Activated CD8-positive, alpha-beta T cell treated with anti-CD3 and anti-CD28 coated beads, Interleukin-2, amount 10 ng/mL, durations not matched to agents 7 days and 5 days (primary cell): ENCODE measurements at regions of chr12 and their contacts with region 1.

Region 1: DNA sequence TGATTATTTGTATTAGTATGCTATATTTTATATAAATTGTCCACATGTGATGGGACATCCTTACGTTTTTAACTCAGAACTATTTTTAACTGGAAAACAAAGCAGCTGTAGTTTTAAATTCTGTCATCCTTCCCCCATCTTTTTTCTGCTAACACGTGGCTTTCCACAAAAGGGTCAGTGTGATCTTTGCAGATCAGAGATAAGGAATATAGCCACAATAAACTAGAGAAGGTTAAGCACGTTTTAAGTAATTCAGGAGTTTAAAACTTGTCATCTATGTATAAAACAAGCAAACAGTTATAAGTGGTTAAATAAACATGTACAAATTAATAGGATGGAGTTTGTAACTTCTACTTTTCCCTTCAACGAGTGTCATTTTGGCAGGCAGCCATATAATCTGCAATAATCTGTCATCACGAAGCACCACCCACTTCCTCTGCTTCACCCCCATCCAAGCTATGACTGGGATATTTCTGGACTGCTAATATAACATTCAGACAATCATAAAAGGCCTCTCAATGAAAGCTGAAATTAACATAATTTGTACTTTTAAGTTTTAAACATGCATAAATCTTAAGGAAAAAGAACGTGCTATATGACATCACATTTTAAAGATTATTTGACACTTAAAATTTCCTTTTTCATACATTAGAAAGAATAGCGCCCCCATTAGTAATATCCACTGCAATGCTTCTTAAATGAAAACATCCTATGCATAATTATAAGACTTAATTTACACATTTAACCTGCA is 15.3 kb downstream of the TAOK3 start:
- DNase-seq: peak; percentile 69
- ATAC-seq: peak; percentile 74
- H3K4me3 Mint-ChIP-seq: peak overlapping the region; percentile 88
- H3K27ac Mint-ChIP-seq: peak overlapping the region; percentile 83
- H3K4me1 Mint-ChIP-seq: peaks cover 41% of the 10 kb centered on the region
- H3K27me3 Mint-ChIP-seq: no peaks in the 10 kb centered on the region

Region 2: GRCh38 chr12:118150625-118151024 is 206.8 kb before region 1 on chr12:
- CTCF ChIA-PET with region 1: no interaction called
- POLR2A ChIA-PET with region 1: no interaction called
- DNase-seq: no peak
- ATAC-seq: no peak
- H3K4me3 Mint-ChIP-seq: no peak overlapping the region
- H3K27ac Mint-ChIP-seq: no peak overlapping the region
- H3K4me1 Mint-ChIP-seq: no peaks in the 10 kb centered on the region
- H3K27me3 Mint-ChIP-seq: no peaks in the 10 kb centered on the region

Region 3: GRCh38 chr12:118164798-118165486 is 192.5 kb before region 1 on chr12:
- CTCF ChIA-PET with region 1: interaction called, 14 read pairs
- POLR2A ChIA-PET with region 1: no interaction called
- DNase-seq: no peak
- ATAC-seq: no peak
- H3K4me3 Mint-ChIP-seq: no peak overlapping the region
- H3K27ac Mint-ChIP-seq: no peak overlapping the region
- H3K4me1 Mint-ChIP-seq: peaks cover 2% of the 10 kb centered on the region
- H3K27me3 Mint-ChIP-seq: no peaks in the 10 kb centered on the region

Region 4: DNA sequence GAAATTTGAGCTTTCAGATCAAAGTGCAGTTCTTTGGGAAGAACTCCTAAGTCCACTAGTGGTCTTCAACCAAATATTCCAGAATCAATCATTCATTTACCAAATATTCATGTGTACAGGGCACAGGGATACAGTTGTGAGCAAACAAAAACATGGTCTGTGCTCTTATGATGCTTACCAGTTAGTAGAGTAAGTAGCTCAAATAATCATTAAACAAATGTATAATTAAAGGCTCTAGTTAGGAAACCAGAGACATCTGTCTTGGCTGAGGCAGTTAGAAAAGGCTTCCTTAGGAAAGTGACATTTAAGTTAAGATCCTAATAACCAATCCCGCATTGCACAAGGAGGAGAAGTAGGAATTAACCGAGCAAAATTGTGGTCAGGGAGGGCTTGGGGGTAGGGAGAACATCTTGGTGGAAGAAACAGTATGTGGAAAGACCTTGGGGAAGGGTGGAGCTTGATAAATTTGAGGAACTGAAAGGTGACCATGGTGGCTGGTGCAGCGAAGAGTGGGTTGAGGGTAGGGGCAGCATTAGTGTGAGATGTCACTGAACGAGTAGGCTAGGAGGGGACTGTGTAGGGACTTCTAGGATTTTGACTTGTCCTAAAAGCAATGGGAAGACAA is 181.5 kb before region 1 on chr12:
- CTCF ChIA-PET with region 1: interaction called, 13 read pairs
- POLR2A ChIA-PET with region 1: no interaction called
- DNase-seq: no peak
- ATAC-seq: no peak
- H3K4me3 Mint-ChIP-seq: no peak overlapping the region
- H3K27ac Mint-ChIP-seq: no peak overlapping the region
- H3K4me1 Mint-ChIP-seq: no peaks in the 10 kb centered on the region
- H3K27me3 Mint-ChIP-seq: no peaks in the 10 kb centered on the region

Region 5: DNA sequence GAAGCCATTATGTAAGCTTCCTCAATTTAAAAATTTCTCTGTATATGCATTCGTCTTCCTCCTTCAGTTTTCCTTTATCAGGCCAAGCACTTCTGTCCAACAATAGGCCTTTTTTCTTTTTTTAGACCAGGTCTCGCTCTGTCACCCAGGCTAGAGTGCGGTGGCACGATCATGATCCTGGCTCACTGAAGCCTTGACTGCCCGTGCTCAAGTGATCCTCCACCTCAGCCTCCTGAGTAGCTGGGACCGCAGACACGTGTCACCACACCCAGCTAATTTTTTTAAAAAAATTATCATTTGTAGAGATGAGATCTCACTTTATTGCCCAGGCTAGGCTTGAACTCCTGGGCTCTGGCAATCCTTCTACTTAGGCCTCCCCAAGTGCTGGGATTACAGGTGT is 10.5 kb before region 1 on chr12:
- CTCF ChIA-PET with region 1: interaction called, 17 read pairs
- POLR2A ChIA-PET with region 1: interaction called, 4 read pairs
- DNase-seq: no peak
- ATAC-seq: no peak
- H3K4me3 Mint-ChIP-seq: no peak overlapping the region
- H3K27ac Mint-ChIP-seq: no peak overlapping the region
- H3K4me1 Mint-ChIP-seq: peaks cover 1% of the 10 kb centered on the region
- H3K27me3 Mint-ChIP-seq: no peaks in the 10 kb centered on the region

Region 6: GRCh38 chr12:118432812-118433545 is 75.5 kb after region 1 on chr12:
- CTCF ChIA-PET with region 1: no interaction called
- POLR2A ChIA-PET with region 1: no interaction called
- DNase-seq: no peak
- ATAC-seq: no peak
- H3K4me3 Mint-ChIP-seq: no peak overlapping the region
- H3K27ac Mint-ChIP-seq: no peak overlapping the region
- H3K4me1 Mint-ChIP-seq: no peaks in the 10 kb centered on the region
- H3K27me3 Mint-ChIP-seq: no peaks in the 10 kb centered on the region

Region 7: GRCh38 chr12:118513611-118514010 is 156.2 kb after region 1 on chr12:
- CTCF ChIA-PET with region 1: no interaction called
- POLR2A ChIA-PET with region 1: no interaction called
- DNase-seq: no peak
- ATAC-seq: no peak
- H3K4me3 Mint-ChIP-seq: no peak overlapping the region
- H3K27ac Mint-ChIP-seq: no peak overlapping the region
- H3K4me1 Mint-ChIP-seq: no peaks in the 10 kb centered on the region
- H3K27me3 Mint-ChIP-seq: no peaks in the 10 kb centered on the region